ENCODE measurements at regions of chr11 and their contacts with region 1.

Region 1: GRCh38 chr11:65540297-65541092 is 15.6 kb downstream of the SCYL1 start:
- DNase-seq: peak; percentile 92
- ATAC-seq: peak; percentile 91
- H3K4me3 Mint-ChIP-seq: peak overlapping the region; percentile 79
- H3K27ac Mint-ChIP-seq: peak overlapping the region; percentile 82
- H3K4me1 Mint-ChIP-seq: peaks cover 20% of the 10 kb centered on the region
- H3K27me3 Mint-ChIP-seq: no peaks in the 10 kb centered on the region

Region 2: DNA sequence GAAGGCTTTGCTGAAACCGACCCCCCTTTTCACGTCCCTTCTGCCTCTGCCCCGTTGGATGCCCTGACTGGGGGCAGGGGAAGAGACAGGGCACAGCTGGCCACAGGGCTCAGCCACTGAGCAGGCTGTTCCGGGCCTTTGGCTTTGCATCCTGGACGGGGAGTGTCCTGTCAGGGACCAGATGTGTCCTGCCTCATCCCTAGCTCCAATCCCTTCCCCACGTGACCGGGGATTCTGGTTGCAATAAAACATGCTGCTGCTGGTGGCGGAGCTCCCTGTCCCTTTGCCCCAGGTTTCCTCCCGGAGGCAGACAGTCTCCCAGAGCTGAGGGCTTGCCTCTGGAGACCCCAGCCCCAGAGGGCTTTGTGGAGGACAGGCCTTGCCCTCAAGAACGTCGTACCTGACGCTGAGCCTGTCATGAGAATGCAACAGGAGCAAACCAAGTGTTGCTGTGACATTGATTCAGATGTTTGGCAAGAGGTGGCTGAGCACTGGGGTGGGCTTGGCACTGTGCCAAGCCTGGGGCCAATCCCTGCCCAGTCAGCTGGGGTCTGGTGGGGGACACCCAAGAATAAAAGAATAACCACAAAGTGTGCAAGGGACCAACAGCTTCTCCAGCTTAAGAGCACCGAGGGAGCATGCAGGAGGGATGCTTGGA is 218.5 kb before region 1 on chr11:
- CTCF ChIA-PET with region 1: no interaction called
- POLR2A ChIA-PET with region 1: no interaction called
- DNase-seq: no peak
- ATAC-seq: no peak
- H3K4me3 Mint-ChIP-seq: no peak overlapping the region
- H3K27ac Mint-ChIP-seq: no peak overlapping the region
- H3K4me1 Mint-ChIP-seq: no peaks in the 10 kb centered on the region
- H3K27me3 Mint-ChIP-seq: peaks cover 4% of the 10 kb centered on the region

Region 3: DNA sequence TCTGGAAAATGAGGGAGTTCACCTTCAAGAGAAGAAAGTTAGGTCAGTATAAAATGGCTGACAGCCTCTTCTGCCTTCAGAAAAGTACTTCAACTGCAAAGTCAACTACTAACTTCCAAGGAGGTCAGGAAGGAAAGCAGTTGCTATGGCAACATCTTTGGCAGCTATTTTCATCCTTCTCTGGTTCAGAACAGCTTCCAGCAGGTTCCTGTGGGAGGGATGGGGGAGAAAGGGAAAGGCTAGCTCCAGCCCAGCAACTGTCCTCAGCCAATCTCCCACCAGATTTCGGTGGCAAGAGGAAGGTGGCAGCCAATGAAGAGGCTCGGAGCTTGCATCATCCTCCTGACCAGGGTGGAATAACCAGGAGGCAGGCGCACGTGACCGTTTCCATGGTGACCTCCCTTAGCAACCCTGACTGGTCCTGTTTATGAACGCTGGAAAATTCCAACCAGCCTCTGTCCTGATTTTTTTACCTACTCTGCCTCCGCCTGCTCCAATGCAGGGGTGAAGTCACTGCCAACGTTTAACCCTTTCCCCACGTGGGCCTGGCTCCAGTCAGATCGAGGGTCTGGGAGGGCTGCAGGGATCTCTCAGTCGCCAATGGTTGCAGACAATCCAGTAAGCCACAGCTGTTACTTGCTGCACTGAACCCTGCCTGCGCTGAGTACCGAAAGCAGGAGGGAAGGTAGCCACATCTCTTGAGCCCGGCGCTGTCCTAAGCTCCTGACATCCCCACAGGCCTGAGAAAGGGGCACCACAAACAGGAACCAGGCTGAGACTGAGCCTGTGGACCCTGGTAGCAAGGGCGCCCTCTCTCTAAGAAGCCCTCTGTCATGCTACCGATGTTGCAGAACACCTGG is 52.9 kb before region 1 on chr11:
- CTCF ChIA-PET with region 1: no interaction called
- POLR2A ChIA-PET with region 1: no interaction called
- DNase-seq: no peak
- ATAC-seq: peak; percentile 54
- H3K4me3 Mint-ChIP-seq: no peak overlapping the region
- H3K27ac Mint-ChIP-seq: no peak overlapping the region
- H3K4me1 Mint-ChIP-seq: peaks cover 31% of the 10 kb centered on the region
- H3K27me3 Mint-ChIP-seq: peaks cover 3% of the 10 kb centered on the region

Region 4: DNA sequence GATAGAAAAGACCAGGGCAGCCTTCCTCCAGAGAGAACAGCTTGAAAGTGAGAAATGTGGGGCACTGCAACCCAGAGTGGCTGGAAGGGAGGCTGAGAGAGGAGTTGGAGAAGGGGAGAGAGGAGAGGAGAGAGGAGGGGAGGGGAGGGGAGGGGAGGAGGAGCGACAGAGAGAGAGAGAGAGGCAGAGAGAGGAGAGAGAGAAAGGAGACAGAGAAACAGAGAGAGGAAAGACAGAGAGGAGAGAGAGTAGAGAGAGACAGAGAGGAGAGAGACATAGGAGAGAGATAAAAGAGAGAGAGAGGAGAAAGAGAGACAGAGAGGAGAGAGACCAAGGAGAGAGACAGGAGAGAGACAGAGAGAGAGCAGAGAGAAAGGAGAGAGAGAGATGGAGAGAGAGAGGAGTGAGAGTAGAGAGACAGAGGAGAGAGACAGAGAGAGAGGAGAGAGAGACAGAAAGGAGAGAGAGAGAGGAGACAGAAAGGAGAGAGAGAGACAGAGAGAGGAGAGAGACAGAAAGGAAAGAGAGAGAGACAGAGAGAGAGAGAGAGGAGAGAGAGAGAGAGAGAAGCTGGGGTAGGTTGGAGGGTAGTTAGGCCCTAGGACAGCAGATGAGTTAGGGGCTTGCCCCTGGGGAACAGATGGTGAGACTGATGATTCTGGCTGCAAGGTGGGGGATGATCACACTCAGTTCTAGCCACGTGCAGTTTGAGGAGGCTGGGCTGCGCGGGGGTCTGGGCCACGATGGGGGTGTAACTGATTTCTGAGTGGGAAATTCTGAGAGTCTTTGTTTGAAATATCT is 24.2 kb before region 1 on chr11:
- CTCF ChIA-PET with region 1: interaction called, 10 read pairs
- POLR2A ChIA-PET with region 1: interaction called, 3 read pairs
- DNase-seq: no peak
- ATAC-seq: peak; percentile 62
- H3K4me3 Mint-ChIP-seq: no peak overlapping the region
- H3K27ac Mint-ChIP-seq: peak overlapping the region; percentile 32
- H3K4me1 Mint-ChIP-seq: peaks cover 10% of the 10 kb centered on the region
- H3K27me3 Mint-ChIP-seq: no peaks in the 10 kb centered on the region

Region 5: DNA sequence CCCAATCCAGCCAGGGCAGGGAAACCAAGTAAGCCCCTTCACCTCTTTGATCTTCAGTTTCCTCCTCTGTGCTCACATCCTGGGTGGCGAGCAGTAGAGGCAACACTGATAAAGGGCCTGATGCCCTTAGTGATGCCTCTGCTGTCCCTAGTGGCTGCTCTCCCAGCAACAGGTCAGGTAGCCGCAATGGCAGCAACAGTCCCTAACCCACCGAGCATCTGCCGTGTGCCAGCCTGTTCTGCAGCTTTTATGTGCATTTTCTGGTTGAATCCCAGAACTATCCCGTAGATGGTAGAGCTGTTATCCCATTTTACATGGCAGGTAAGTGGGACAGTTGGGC is 10.4 kb before region 1 on chr11:
- CTCF ChIA-PET with region 1: interaction called, 41 read pairs
- POLR2A ChIA-PET with region 1: interaction called, 12 read pairs
- DNase-seq: peak; percentile 70
- ATAC-seq: peak; percentile 83
- H3K4me3 Mint-ChIP-seq: no peak overlapping the region
- H3K27ac Mint-ChIP-seq: peak overlapping the region; percentile 84
- H3K4me1 Mint-ChIP-seq: peaks cover 46% of the 10 kb centered on the region
- H3K27me3 Mint-ChIP-seq: no peaks in the 10 kb centered on the region

Region 6: DNA sequence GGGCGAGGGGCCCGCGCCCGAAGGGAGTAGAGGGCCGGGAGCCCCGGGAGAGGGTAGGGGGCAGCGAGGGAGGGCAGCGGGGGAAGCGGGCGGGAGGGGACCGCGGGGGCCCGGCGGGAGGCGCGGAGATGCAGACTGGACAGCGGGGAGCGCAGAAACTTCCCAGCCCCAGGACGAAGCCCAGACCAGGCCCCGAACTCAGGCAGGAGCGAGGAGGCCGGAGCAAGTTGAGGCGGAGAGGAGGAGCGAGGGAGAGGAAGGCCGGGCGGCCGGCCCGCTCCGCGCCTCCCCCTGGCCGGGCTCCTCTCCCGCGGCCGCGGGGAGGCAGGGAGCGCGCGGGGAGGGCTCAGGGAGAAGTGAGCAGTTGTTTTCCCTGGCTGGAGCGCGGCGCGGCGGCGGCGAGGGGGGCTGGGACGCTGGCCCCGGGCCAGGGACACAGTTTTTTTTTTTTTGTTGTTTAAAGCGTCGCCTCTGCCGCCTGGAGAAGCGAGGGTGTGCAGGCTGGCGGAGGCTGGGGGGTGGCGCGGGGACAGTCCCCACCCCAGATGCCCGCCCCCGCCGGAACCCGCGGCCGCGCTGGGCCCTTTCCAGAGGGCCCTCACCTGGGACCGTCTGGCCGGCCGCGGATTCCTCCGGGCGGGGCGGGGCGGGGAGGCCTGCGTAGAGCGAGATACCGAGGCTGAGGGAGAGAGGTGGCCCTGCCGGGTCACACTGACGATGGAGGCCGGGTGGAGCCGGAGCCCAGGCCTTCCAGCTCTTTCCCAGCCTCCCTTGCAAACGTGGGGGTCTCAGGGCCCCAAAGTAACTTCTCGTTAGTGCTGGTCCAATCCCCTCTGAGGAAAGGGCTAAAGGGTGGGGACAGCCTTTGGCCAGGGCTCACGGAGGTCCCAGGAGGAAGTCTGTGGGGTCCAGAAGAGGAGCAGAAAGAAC is 17.8 kb after region 1 on chr11 and contains the start of gene LTBP3:
- CTCF ChIA-PET with region 1: interaction called, 47 read pairs
- POLR2A ChIA-PET with region 1: interaction called, 3 read pairs
- DNase-seq: no peak
- ATAC-seq: peak; percentile 52
- H3K4me3 Mint-ChIP-seq: peak within 1 kb of the TSS; percentile 82
- H3K27ac Mint-ChIP-seq: peak within 1 kb of the TSS; percentile 78
- H3K4me1 Mint-ChIP-seq: peaks cover 58% of the 10 kb centered on the region
- H3K27me3 Mint-ChIP-seq: no peaks in the 10 kb centered on the region
- total RNA-seq, gene LTBP3: 64.7 to 70.8 TPM

Region 7: GRCh38 chr11:65575568-65576231 is 35.2 kb after region 1 on chr11 and contains the start of gene EHBP1L1:
- CTCF ChIA-PET with region 1: interaction called, 95 read pairs
- POLR2A ChIA-PET with region 1: interaction called, 9 read pairs
- DNase-seq: peak; percentile 79
- ATAC-seq: peak; percentile 31
- H3K4me3 Mint-ChIP-seq: peak within 1 kb of the TSS; percentile 91
- H3K27ac Mint-ChIP-seq: peak within 1 kb of the TSS; percentile 89
- H3K4me1 Mint-ChIP-seq: peaks cover 62% of the 10 kb centered on the region
- H3K27me3 Mint-ChIP-seq: no peaks in the 10 kb centered on the region
- total RNA-seq, gene EHBP1L1: 94.4 to 95.3 TPM

Measured in activated CD8-positive, alpha-beta T cell treated with anti-CD3 and anti-CD28 coated beads, Interleukin-2, amount 10 ng/mL, durations not matched to agents 7 days and 5 days (primary cell).